ENCODE measurements at regions of chr17 and their contacts with region 1.

Region 1: GRCh38 chr17:75632863-75633485 is at the start of gene SMIM5:
- DNase-seq: peak; percentile 87
- H3K4me3 Mint-ChIP-seq: no peak within 1 kb of the TSS
- H3K27ac Mint-ChIP-seq: no peak within 1 kb of the TSS
- H3K4me1 Mint-ChIP-seq: no peaks in the 10 kb centered on the region
- H3K27me3 Mint-ChIP-seq: no peaks in the 10 kb centered on the region
- total RNA-seq, gene SMIM5: not detected

Region 2: DNA sequence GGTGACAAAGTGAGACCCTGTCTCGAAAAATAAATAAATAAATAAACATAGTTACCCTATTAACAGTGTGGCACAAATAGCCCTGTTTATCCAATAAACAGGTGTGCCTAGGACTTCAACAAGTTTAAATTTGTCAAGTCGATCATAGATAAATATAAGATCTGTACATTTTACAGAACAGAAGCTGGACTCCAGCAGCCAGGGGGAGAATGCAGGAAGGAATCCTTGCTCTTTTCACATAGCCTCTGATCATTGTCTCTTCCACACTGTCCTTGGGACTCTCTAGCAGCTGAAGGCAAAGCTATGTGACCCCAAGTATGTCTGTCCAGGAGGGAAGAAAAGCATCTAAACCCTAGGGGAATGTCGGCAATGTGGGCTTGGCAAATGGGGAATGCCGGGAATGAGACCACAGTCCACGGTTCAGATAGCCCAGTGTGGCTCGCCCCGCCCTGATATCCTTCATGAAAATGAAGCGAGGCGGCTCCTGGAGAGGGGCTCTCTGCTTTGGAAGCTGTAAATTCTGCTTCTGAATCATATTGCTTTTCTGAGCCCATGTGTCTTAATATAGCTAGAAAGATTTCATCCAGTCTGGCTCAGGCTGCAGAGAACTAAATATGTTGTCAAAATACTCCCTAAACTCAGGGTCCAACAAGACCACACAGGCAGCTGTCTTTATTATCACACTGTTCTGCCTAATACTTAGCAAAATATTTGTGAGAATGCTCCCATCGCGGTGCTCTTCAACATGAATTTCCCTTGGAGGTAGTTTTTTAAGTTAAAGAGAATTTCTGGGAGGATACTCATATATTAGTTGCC is 202.6 kb before region 1 on chr17:
- CTCF ChIA-PET with region 1: interaction called, 9 read pairs
- POLR2A ChIA-PET with region 1: no interaction called
- intact Hi-C with region 1: loop called (anchors 2 kb)
- DNase-seq: no peak
- H3K4me3 Mint-ChIP-seq: no peak overlapping the region
- H3K27ac Mint-ChIP-seq: no peak overlapping the region
- H3K4me1 Mint-ChIP-seq: peaks cover 18% of the 10 kb centered on the region
- H3K27me3 Mint-ChIP-seq: no peaks in the 10 kb centered on the region

Region 3: GRCh38 chr17:75619506-75620431 is 13.2 kb before region 1 on chr17:
- CTCF ChIA-PET with region 1: interaction called, 60 read pairs
- POLR2A ChIA-PET with region 1: no interaction called
- intact Hi-C with region 1: no loop called
- DNase-seq: peak; percentile 30
- H3K4me3 Mint-ChIP-seq: no peak overlapping the region
- H3K27ac Mint-ChIP-seq: no peak overlapping the region
- H3K4me1 Mint-ChIP-seq: no peaks in the 10 kb centered on the region
- H3K27me3 Mint-ChIP-seq: no peaks in the 10 kb centered on the region

Region 4: GRCh38 chr17:75652915-75653549 is 20.1 kb after region 1 on chr17:
- CTCF ChIA-PET with region 1: interaction called, 70 read pairs
- POLR2A ChIA-PET with region 1: no interaction called
- intact Hi-C with region 1: no loop called
- DNase-seq: peak; percentile 30
- H3K4me3 Mint-ChIP-seq: no peak overlapping the region
- H3K27ac Mint-ChIP-seq: no peak overlapping the region
- H3K4me1 Mint-ChIP-seq: no peaks in the 10 kb centered on the region
- H3K27me3 Mint-ChIP-seq: no peaks in the 10 kb centered on the region

Region 5: DNA sequence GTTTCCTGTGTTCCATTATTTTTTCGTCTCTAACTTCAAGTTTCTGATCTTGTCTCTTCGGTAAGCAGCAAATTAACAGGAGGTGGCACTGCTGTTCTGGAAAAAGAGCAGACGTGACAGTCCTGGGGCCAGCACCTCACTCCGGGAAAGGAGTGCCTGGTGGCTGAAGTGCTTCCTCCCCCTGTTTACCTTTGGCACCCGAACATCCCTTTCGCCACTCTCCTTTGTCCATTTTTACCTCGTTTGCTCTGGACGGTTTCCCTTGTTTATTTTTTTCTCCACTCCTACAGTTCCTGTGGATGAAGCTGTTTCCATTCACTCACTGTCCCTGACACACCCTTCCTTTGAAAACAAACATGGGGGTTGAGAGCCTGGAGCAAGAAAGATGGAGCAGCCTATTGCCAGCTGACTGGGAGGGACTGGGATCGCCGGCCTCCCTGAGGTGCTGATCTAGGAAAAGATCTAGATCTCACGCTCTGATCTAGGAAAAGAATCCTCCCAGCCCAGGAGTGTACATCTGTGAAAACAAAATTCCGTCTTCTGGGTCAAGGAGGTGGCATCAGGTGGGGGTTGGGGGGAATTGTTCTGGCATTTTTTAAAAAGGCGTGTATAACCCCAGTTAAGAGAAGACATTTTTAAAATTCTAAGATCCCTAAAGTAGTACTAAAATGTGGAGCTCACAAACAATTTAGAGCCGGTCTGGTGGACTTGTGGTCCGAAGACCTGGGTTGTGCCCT is 46.9 kb after region 1 on chr17:
- CTCF ChIA-PET with region 1: interaction called, 11 read pairs
- POLR2A ChIA-PET with region 1: no interaction called
- intact Hi-C with region 1: no loop called
- DNase-seq: no peak
- H3K4me3 Mint-ChIP-seq: no peak overlapping the region
- H3K27ac Mint-ChIP-seq: no peak overlapping the region
- H3K4me1 Mint-ChIP-seq: peaks cover 20% of the 10 kb centered on the region
- H3K27me3 Mint-ChIP-seq: no peaks in the 10 kb centered on the region

Region 6: GRCh38 chr17:75894049-75894711 is 261.2 kb after region 1 on chr17:
- CTCF ChIA-PET with region 1: no interaction called
- POLR2A ChIA-PET with region 1: no interaction called
- intact Hi-C with region 1: no loop called
- DNase-seq: no peak
- H3K4me3 Mint-ChIP-seq: no peak overlapping the region
- H3K27ac Mint-ChIP-seq: peak overlapping the region; percentile 18
- H3K4me1 Mint-ChIP-seq: peaks cover 24% of the 10 kb centered on the region
- H3K27me3 Mint-ChIP-seq: no peaks in the 10 kb centered on the region

Region 7: GRCh38 chr17:76063875-76064546 is 431.0 kb after region 1 on chr17:
- CTCF ChIA-PET with region 1: no interaction called
- POLR2A ChIA-PET with region 1: no interaction called
- intact Hi-C with region 1: no loop called
- DNase-seq: peak; percentile 80
- H3K4me3 Mint-ChIP-seq: peak overlapping the region; percentile 25
- H3K27ac Mint-ChIP-seq: peak overlapping the region; percentile 84
- H3K4me1 Mint-ChIP-seq: peaks cover 31% of the 10 kb centered on the region
- H3K27me3 Mint-ChIP-seq: no peaks in the 10 kb centered on the region

Measured in activated CD4-positive, alpha-beta memory T cell treated with anti-CD3 and anti-CD28 coated beads for 36 hours (primary cell).